ENCODE measurements at regions of chr9 and their contacts with region 1.

Region 1: DNA sequence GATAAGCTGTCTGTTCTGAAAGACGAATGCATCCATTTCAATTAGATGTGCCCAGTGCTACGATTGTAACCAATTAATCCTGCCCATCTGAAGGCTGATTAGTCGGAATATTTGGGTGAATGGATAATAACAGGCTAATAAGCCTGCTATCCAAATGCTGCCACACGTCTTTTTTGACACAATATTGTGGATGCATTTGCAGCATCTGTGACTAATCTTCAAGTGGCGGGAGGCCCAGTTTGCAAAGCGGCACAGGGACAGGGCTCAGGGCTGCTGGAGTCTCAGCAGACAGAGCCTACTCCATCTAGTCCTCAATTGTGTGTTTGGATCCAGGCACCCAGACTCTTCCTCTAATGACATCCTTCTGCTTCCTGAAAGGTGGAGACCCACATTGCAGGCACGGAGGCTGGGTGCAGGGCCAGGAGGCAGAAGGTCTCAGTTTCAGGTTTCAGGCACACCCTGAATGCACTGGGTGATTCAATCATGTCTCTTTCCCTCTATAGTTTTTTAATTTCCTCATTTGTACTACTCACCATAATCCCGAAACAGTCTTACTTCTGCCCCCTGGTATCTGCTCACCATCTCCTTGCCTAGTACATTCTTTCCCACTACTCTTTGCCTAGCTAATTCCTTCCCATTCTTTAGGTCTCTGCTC is 169.6 kb downstream of the ASTN2 start:
- DNase-seq: no peak
- H3K4me3 ChIP-seq: no peak overlapping the region
- H3K27ac ChIP-seq: no peak overlapping the region
- H3K4me1 ChIP-seq: no peaks in the 10 kb centered on the region
- H3K27me3 ChIP-seq: no peaks in the 10 kb centered on the region
- CTCF ChIP-seq: no peak
- EP300 ChIP-seq: no peak
- POLR2A ChIP-seq: no peak

Region 2: DNA sequence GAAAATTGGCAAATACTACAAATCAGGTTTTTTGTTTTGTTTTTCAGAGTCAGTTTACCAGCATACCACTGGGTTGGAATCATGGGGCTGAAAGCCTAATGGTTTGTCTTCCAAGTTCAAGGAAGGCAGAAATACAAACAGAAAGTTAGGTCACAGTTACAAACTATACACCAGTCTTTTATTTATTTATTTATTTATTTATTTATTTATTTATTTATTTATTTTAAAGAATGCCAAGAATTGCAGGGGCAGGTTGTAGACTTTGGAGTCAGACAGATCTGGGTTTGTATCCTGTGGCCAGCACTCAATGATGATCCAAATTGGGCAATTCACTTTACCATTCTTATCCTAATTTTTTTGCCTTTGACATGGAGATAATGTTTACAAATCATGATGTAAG is 184.3 kb before region 1 on chr9:
- intact Hi-C with region 1: no loop called
- DNase-seq: no peak
- H3K4me3 ChIP-seq: no peak overlapping the region
- H3K27ac ChIP-seq: no peak overlapping the region
- H3K4me1 ChIP-seq: no peaks in the 10 kb centered on the region
- H3K27me3 ChIP-seq: no peaks in the 10 kb centered on the region
- CTCF ChIP-seq: no peak
- EP300 ChIP-seq: no peak
- POLR2A ChIP-seq: no peak

Region 3: GRCh38 chr9:117258184-117258866 is 13.0 kb after region 1 on chr9:
- intact Hi-C with region 1: loop called in 1 of 4 experiments (anchors 2 kb)
- DNase-seq: no peak
- H3K4me3 ChIP-seq: no peak overlapping the region
- H3K27ac ChIP-seq: no peak overlapping the region
- H3K4me1 ChIP-seq: no peaks in the 10 kb centered on the region
- H3K27me3 ChIP-seq: no peaks in the 10 kb centered on the region
- CTCF ChIP-seq: no peak
- EP300 ChIP-seq: no peak
- POLR2A ChIP-seq: no peak

Region 4: GRCh38 chr9:117325831-117326230 is 80.5 kb after region 1 on chr9:
- intact Hi-C with region 1: no loop called
- DNase-seq: no peak
- H3K4me3 ChIP-seq: no peak overlapping the region
- H3K27ac ChIP-seq: no peak overlapping the region
- H3K4me1 ChIP-seq: no peaks in the 10 kb centered on the region
- H3K27me3 ChIP-seq: no peaks in the 10 kb centered on the region
- CTCF ChIP-seq: no peak
- EP300 ChIP-seq: no peak
- POLR2A ChIP-seq: no peak

Measured in ovary (tissue), 10 donors.